ENCODE measurements at regions of chr11 and their contacts with region 1.

Region 1: GRCh38 chr11:10735481-10736475 is 15.3 kb upstream of the CTR9 start:
- DNase-seq: peak; percentile 90 to 93
- H3K4me3 ChIP-seq: peak overlapping the region; percentile 39; the same call in 1 of the 2 replicates
- H3K27ac ChIP-seq: peak overlapping the region; percentile 78
- H3K4me1 ChIP-seq: peaks cover 5% of the 10 kb centered on the region; the same call in 1 of the 2 replicates
- H3K27me3 ChIP-seq: no peaks in the 10 kb centered on the region
- CTCF ChIP-seq: peak; percentile 90

Region 2: DNA sequence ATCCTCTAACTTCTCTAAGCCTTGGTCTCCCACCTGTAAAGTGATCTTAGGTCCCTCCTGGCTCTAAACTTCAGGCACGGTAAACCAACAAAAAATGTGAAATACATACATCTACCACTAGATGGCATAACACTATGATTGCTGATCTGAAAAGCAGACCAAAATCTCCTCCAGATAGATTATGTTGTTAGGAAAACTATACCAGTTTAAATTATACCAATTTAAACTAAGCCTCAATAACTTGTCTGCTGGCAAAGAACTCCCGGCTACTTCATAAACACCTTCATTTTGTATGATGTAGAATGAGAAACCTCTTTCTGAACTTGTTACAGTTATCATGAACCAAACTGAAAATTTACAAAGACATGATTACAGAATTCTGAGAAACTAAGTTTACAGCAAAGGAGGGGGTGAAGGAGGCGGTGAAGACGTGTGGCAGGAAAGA is 527.6 kb before region 1 on chr11:
- CTCF ChIA-PET with region 1: no interaction called
- POLR2A ChIA-PET with region 1: no interaction called
- intact Hi-C with region 1: loop called (anchors 5 kb)
- DNase-seq: no peak
- H3K4me3 ChIP-seq: no peak overlapping the region
- H3K27ac ChIP-seq: no peak overlapping the region
- H3K4me1 ChIP-seq: 0 out of 2 replicates have a peak, but pooled peaks cover 3% of the 10 kb centered on the region
- H3K27me3 ChIP-seq: no peaks in the 10 kb centered on the region
- CTCF ChIP-seq: peak; percentile 75

Region 3: GRCh38 chr11:10405855-10406592 is 329.8 kb before region 1 on chr11:
- CTCF ChIA-PET with region 1: interaction called, 4 read pairs
- POLR2A ChIA-PET with region 1: no interaction called
- intact Hi-C with region 1: loop called (anchors 1 kb)
- DNase-seq: peak; percentile 37 to 72
- H3K4me3 ChIP-seq: no peak overlapping the region
- H3K27ac ChIP-seq: peak overlapping the region; percentile 87
- H3K4me1 ChIP-seq: peaks cover 17% of the 10 kb centered on the region
- H3K27me3 ChIP-seq: no peaks in the 10 kb centered on the region
- CTCF ChIP-seq: peak; percentile 68

Region 4: GRCh38 chr11:10514210-10514609 is 221.6 kb before region 1 on chr11:
- CTCF ChIA-PET with region 1: no interaction called
- POLR2A ChIA-PET with region 1: no interaction called
- intact Hi-C with region 1: loop called (anchors 1 kb)
- DNase-seq: no peak
- H3K4me3 ChIP-seq: no peak overlapping the region
- H3K27ac ChIP-seq: no peak overlapping the region
- H3K4me1 ChIP-seq: 0 out of 2 replicates have a peak, but pooled peaks cover 4% of the 10 kb centered on the region
- H3K27me3 ChIP-seq: no peaks in the 10 kb centered on the region
- CTCF ChIP-seq: peak; percentile 60

Region 5: DNA sequence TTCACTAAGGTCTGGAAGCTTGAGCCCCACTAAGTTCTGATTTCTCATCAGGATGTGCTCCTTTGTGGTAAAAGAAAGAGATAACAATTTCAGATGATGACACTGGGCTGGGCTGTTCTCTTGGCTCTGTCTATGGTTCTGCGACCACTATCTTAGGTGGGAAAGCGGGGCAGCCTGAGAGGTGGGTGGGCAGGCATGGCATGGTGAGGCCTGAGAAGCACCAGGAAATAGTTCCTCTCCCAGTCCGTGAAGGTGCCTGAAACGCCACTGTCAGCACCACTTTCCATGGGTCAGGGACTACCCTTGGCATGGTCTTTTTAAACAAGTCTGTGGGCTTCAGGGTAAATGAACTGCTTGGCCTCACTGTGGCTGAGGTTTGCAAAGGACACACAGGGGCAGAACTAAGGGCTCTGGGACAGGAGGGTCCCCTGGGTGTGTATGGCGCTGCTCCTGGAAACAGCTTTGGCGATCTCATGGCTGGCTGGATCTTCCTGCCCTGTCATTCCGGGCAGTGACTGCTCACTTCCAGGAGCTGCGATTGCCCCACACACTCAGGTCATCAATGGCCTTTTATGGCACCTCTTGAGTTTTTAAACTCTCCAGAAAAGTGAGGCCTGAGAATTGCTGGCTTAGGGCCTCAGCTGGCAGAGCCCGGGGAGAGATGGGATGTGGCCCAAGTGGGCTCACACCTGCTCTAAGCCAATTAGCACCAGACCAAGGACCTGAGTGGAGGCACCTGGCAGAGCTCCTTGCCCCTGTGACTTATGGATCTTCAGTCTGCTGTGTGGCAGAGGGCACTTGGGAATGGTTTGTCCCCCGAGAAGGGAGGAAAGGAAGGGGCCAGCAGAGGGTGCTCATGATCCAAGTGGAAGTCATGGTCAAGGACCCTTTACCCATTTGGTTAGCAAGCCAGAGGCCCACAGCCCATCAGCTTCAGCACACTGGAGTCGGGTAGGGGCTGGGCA is 111.7 kb before region 1 on chr11:
- CTCF ChIA-PET with region 1: no interaction called
- POLR2A ChIA-PET with region 1: no interaction called
- intact Hi-C with region 1: loop called (anchors 1 kb)
- DNase-seq: peak in 1 of 2 experiments; percentile 18
- H3K4me3 ChIP-seq: no peak overlapping the region
- H3K27ac ChIP-seq: no peak overlapping the region
- H3K4me1 ChIP-seq: no peaks in the 10 kb centered on the region
- H3K27me3 ChIP-seq: no peaks in the 10 kb centered on the region
- CTCF ChIP-seq: peak; percentile 51

Region 6: DNA sequence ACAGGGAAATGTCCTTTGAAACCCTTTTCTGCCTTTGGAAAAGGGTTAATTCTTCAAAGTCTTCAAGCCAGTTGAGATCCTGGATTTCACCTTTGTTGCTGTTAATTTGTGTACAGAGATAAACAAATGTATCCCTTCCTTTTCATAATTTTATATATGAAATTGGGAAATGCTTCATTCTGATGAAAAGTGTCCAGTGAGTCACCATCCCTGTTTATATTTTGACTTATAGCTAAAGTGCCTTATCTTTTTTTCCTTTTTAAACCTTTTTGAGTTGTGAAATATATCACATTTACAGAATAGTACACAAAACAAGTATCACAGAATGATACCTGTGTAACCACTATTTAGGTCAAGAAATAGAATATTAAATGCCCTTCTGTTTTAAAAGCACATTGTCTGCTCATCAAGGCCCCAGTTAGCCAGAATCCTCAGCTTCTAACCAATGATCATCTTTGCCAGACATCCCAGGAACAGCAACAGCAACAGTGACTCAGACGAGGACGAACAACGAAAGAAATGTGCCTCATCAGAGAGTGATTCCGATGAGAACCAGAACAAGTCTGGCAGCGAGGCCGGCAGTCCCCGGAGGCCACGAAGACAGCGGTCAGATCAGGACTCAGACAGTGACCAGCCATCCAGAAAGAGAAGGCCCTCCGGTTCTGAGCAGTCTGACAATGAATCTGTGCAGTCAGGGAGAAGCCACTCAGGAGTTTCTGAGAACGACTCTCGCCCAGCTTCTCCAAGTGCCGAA is 42.6 kb after region 1 on chr11:
- CTCF ChIA-PET with region 1: no interaction called
- POLR2A ChIA-PET with region 1: no interaction called
- intact Hi-C with region 1: no loop called
- DNase-seq: no peak
- H3K4me3 ChIP-seq: no peak overlapping the region
- H3K27ac ChIP-seq: no peak overlapping the region
- H3K4me1 ChIP-seq: no peaks in the 10 kb centered on the region
- H3K27me3 ChIP-seq: no peaks in the 10 kb centered on the region
- CTCF ChIP-seq: no peak